ENCODE measurements at regions of chr1 and their contacts with region 1.

Region 1: GRCh38 chr1:149886396-149887195 is 12.8 kb upstream of the BOLA1 start:
- DNase-seq: peak; percentile 91
- ATAC-seq: peak; percentile 60
- H3K4me3 Mint-ChIP-seq: no peak overlapping the region
- H3K27ac Mint-ChIP-seq: no peak overlapping the region
- H3K4me1 Mint-ChIP-seq: peaks cover 7% of the 10 kb centered on the region
- H3K27me3 Mint-ChIP-seq: no peaks in the 10 kb centered on the region

Region 2: GRCh38 chr1:149844101-149844500 is 42.5 kb before region 1 on chr1:
- CTCF ChIA-PET with region 1: interaction called, 5 read pairs
- POLR2A ChIA-PET with region 1: interaction called, 28 read pairs
- intact Hi-C with region 1: no loop called
- DNase-seq: peak; percentile 37
- ATAC-seq: no peak
- H3K4me3 Mint-ChIP-seq: peak overlapping the region; percentile 76
- H3K27ac Mint-ChIP-seq: peak overlapping the region; percentile 91
- H3K4me1 Mint-ChIP-seq: peaks cover 42% of the 10 kb centered on the region
- H3K27me3 Mint-ChIP-seq: no peaks in the 10 kb centered on the region

Region 3: GRCh38 chr1:149899460-149900293 is 13.1 kb after region 1 on chr1 and contains the start of gene BOLA1:
- CTCF ChIA-PET with region 1: interaction called, 4 read pairs
- POLR2A ChIA-PET with region 1: interaction called, 33 read pairs
- intact Hi-C with region 1: loop called (anchors 1 kb)
- DNase-seq: peak; percentile 91
- ATAC-seq: peak; percentile 99
- H3K4me3 Mint-ChIP-seq: peak within 1 kb of the TSS; percentile 89
- H3K27ac Mint-ChIP-seq: peak within 1 kb of the TSS; percentile 95
- H3K4me1 Mint-ChIP-seq: peaks cover 18% of the 10 kb centered on the region
- H3K27me3 Mint-ChIP-seq: no peaks in the 10 kb centered on the region
- total RNA-seq, gene BOLA1: 24.1 to 30.0 TPM

Region 4: GRCh38 chr1:150010393-150011115 is 124.0 kb after region 1 on chr1 and contains the start of gene OTUD7B:
- CTCF ChIA-PET with region 1: interaction called, 3 read pairs
- POLR2A ChIA-PET with region 1: interaction called, 13 read pairs
- intact Hi-C with region 1: loop called in 1 of 2 experiments (anchors 1 kb)
- DNase-seq: peak; percentile 88
- ATAC-seq: peak; percentile 62
- H3K4me3 Mint-ChIP-seq: peak within 1 kb of the TSS; percentile 99
- H3K27ac Mint-ChIP-seq: peak within 1 kb of the TSS; percentile 99
- H3K4me1 Mint-ChIP-seq: peaks cover 37% of the 10 kb centered on the region
- H3K27me3 Mint-ChIP-seq: no peaks in the 10 kb centered on the region
- total RNA-seq, gene OTUD7B: 18.5 to 20.1 TPM

Region 5: GRCh38 chr1:150076066-150076465 is 189.5 kb after region 1 on chr1:
- CTCF ChIA-PET with region 1: no interaction called
- POLR2A ChIA-PET with region 1: no interaction called
- intact Hi-C with region 1: no loop called
- DNase-seq: no peak
- ATAC-seq: no peak
- H3K4me3 Mint-ChIP-seq: no peak overlapping the region
- H3K27ac Mint-ChIP-seq: no peak overlapping the region
- H3K4me1 Mint-ChIP-seq: peaks cover 7% of the 10 kb centered on the region
- H3K27me3 Mint-ChIP-seq: no peaks in the 10 kb centered on the region

Region 6: DNA sequence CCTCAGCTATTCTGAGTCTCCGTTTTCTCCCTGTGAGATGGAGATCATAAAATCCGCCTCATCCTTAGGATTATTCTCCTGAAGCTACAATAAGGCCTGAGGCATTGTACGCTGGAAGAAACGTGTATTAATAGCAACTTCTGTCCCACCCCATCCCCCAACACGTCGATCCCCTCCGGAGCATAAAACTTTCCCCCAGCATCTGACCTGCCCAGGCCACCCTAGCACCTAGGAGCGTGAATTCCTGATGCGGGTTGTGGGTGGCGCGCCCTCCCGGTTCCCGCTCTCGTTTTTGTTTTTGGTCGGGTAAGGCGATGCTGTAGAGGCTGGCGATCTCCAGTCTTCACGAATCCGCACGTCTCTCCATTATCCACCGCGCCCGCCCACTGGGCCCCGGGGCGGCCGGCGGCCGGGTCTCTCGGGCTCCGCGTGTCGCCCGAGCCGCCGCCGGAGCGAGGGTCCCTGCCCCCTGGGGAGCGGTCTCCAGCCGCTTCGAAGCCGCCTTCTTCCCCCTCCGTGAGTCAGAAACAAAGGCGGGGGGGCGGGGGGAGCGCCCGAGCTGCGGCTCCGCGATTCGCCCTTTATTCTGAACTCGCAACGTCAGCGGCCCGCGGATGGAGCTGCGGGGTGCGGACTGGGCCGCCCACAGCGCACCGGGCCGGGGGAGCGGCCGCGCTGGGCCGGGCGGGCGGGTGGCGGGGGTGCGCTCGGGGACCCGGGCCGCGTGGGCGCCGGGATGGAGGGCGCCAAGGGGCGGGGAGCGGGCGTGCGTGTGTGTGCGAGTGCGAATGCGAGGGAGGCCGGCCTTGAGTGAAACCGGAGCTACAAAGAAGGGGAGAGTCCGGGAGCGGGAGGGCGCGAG is 262.9 kb after region 1 on chr1 and contains the start of gene PLEKHO1:
- CTCF ChIA-PET with region 1: no interaction called
- POLR2A ChIA-PET with region 1: interaction called, 11 read pairs
- intact Hi-C with region 1: no loop called
- DNase-seq: peak; percentile 89
- ATAC-seq: peak; percentile 74
- H3K4me3 Mint-ChIP-seq: peak within 1 kb of the TSS; percentile 82
- H3K27ac Mint-ChIP-seq: peak within 1 kb of the TSS; percentile 86
- H3K4me1 Mint-ChIP-seq: peaks cover 51% of the 10 kb centered on the region
- H3K27me3 Mint-ChIP-seq: peaks cover 1% of the 10 kb centered on the region
- total RNA-seq, gene PLEKHO1: 13.2 TPM

Region 7: GRCh38 chr1:150194381-150195031 is 307.9 kb after region 1 on chr1:
- CTCF ChIA-PET with region 1: no interaction called
- POLR2A ChIA-PET with region 1: no interaction called
- intact Hi-C with region 1: no loop called
- DNase-seq: no peak
- ATAC-seq: no peak
- H3K4me3 Mint-ChIP-seq: no peak overlapping the region
- H3K27ac Mint-ChIP-seq: no peak overlapping the region
- H3K4me1 Mint-ChIP-seq: no peaks in the 10 kb centered on the region
- H3K27me3 Mint-ChIP-seq: peaks cover 3% of the 10 kb centered on the region

Region 8: DNA sequence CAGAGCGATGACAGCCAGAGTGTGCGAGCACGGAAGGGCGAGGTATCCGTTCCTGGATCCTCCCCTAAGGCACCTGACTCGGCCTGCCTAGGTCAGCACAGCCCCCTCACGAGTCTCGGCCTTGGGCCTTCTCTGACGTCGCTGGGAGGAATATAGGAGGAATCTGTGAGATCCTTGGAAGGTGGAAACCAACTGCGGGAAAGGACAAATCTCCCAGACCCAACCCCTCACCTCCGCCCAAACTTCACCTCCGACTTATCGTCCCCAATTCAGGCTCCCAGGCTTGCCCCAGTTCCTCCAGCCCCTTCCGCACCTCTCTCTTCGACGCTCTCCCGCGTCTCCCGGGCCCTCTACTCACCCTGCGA is 381.7 kb after region 1 on chr1:
- CTCF ChIA-PET with region 1: no interaction called
- POLR2A ChIA-PET with region 1: no interaction called
- intact Hi-C with region 1: no loop called
- DNase-seq: peak; percentile 62
- ATAC-seq: peak; percentile 41
- H3K4me3 Mint-ChIP-seq: peak overlapping the region; percentile 89
- H3K27ac Mint-ChIP-seq: peak overlapping the region; percentile 98
- H3K4me1 Mint-ChIP-seq: peaks cover 25% of the 10 kb centered on the region
- H3K27me3 Mint-ChIP-seq: no peaks in the 10 kb centered on the region

Region 9: GRCh38 chr1:150281837-150282653 is 395.4 kb after region 1 on chr1 and contains the start of gene CIART:
- CTCF ChIA-PET with region 1: no interaction called
- POLR2A ChIA-PET with region 1: no interaction called
- intact Hi-C with region 1: no loop called
- DNase-seq: peak; percentile 89
- ATAC-seq: peak; percentile 96
- H3K4me3 Mint-ChIP-seq: peak within 1 kb of the TSS; percentile 77
- H3K27ac Mint-ChIP-seq: peak within 1 kb of the TSS; percentile 92
- H3K4me1 Mint-ChIP-seq: peaks cover 29% of the 10 kb centered on the region
- H3K27me3 Mint-ChIP-seq: no peaks in the 10 kb centered on the region
- total RNA-seq, gene CIART: 5.9 to 6.0 TPM

Measured in activated CD4-positive, alpha-beta T cell treated with anti-CD3 and anti-CD28 coated beads for 36 hours (primary cell).